HEK293 (cell line): ENCODE measurements at regions of chr6 and their contacts with region 1.

Region 1: GRCh38 chr6:24283043-24283985 is 74.5 kb downstream of the DCDC2 start:
- H3K4me3 ChIP-seq: no peak overlapping the region
- H3K27ac ChIP-seq: no peak overlapping the region
- H3K4me1 ChIP-seq: peaks cover 7% of the 10 kb centered on the region; the same call in 1 of the 2 replicates
- CTCF ChIP-seq: peak; percentile 82

Region 2: GRCh38 chr6:24052616-24052961 is 230.7 kb before region 1 on chr6:
- CTCF ChIA-PET with region 1: no interaction called
- POLR2A ChIA-PET with region 1: no interaction called
- H3K4me3 ChIP-seq: no peak overlapping the region
- H3K27ac ChIP-seq: no peak overlapping the region
- H3K4me1 ChIP-seq: no peaks in the 10 kb centered on the region
- CTCF ChIP-seq: no peak

Region 3: GRCh38 chr6:24245275-24245674 is 38.0 kb before region 1 on chr6:
- CTCF ChIA-PET with region 1: interaction called, 10 read pairs
- POLR2A ChIA-PET with region 1: no interaction called
- H3K4me3 ChIP-seq: no peak overlapping the region
- H3K27ac ChIP-seq: no peak overlapping the region
- H3K4me1 ChIP-seq: no peaks in the 10 kb centered on the region
- CTCF ChIP-seq: no peak

Region 4: GRCh38 chr6:24313251-24314141 is 30.2 kb after region 1 on chr6:
- CTCF ChIA-PET with region 1: interaction called, 18 read pairs
- POLR2A ChIA-PET with region 1: no interaction called
- H3K4me3 ChIP-seq: no peak overlapping the region
- H3K27ac ChIP-seq: no peak overlapping the region
- H3K4me1 ChIP-seq: 0 out of 2 replicates have a peak, but pooled peaks cover 6% of the 10 kb centered on the region
- CTCF ChIP-seq: no peak

Region 5: DNA sequence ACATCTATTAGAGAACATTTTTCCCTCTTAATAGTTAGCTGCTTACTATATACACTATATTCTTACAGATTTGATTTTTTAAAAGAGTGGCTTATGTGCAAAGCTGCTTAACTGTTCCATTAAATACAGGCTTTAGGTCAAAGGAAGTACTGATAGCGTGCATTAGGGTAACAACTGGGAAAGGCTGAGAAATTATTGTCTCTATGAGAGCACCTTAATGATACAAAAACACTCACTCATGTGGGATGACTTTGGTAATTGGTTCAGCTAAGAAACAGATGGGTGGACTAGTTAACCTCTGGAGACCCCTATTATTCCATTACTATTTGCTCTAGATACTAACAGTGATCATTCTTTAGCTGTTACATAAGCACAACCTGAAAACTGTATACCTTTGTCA is 70.5 kb after region 1 on chr6:
- CTCF ChIA-PET with region 1: interaction called, 49 read pairs
- POLR2A ChIA-PET with region 1: interaction called, 12 read pairs
- H3K4me3 ChIP-seq: no peak overlapping the region
- H3K27ac ChIP-seq: no peak overlapping the region
- H3K4me1 ChIP-seq: peaks cover 10% of the 10 kb centered on the region
- CTCF ChIP-seq: no peak

Region 6: DNA sequence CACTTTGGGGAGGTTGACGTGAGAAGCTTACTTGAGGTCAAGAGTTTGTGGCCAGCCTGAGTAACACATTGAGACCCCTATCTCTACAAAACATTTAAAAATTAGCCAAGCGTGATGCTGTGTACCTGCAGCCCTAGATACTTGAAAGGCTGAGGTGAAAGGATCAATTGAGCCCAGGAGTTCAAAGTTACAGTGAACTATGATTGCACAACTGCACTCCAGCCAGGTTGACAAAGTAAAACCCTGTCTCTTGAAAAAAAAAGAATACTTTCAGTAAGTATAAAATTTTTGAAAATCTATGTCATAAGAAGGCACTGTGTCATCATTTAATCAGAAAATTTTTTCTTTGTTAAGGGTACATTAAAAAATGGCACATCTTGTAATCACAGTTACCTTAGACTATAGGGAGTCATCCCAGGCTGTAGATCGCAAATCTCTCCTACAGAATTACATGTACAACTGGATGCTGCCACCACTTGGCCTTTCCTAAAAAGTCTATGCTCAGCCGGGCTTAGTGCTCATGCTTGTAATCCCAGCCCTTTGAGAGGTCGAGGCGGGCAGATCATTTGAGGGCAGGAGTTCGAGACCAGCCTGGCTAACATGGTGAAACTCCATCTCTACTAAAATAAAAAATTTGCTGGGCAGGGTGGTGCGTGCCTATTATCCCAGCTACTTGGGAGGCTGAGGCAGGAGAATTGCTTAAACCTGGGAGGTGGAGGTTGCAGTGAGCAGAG is 102.4 kb after region 1 on chr6:
- CTCF ChIA-PET with region 1: interaction called, 142 read pairs
- POLR2A ChIA-PET with region 1: interaction called, 8 read pairs
- H3K4me3 ChIP-seq: no peak overlapping the region
- H3K27ac ChIP-seq: no peak overlapping the region
- H3K4me1 ChIP-seq: no peaks in the 10 kb centered on the region; the same call in 1 of the 2 replicates
- CTCF ChIP-seq: no peak

Region 7: DNA sequence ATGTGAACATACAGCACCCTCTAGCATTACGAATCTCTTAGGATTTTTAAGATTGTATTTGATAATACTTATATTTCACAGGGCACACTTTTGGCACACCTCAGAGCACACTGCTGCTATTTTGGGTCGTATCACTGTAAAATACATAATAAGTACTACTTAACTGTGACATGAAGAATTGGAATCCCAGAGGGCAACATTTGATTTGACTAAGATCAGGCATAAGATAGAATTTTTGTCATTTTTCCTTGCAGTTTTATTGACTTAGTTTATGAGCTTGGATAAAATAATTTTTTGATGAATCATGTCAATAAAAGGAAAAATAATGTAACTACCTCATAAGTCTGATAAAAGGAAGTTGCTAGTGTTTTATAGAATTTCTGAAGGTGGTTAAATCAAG is 141.8 kb after region 1 on chr6:
- CTCF ChIA-PET with region 1: interaction called, 11 read pairs
- POLR2A ChIA-PET with region 1: no interaction called
- H3K4me3 ChIP-seq: no peak overlapping the region
- H3K27ac ChIP-seq: no peak overlapping the region
- H3K4me1 ChIP-seq: no peaks in the 10 kb centered on the region
- CTCF ChIP-seq: no peak